GM13977 (cell line): ENCODE measurements at regions of chr4 and their contacts with region 1.

Region 1: DNA sequence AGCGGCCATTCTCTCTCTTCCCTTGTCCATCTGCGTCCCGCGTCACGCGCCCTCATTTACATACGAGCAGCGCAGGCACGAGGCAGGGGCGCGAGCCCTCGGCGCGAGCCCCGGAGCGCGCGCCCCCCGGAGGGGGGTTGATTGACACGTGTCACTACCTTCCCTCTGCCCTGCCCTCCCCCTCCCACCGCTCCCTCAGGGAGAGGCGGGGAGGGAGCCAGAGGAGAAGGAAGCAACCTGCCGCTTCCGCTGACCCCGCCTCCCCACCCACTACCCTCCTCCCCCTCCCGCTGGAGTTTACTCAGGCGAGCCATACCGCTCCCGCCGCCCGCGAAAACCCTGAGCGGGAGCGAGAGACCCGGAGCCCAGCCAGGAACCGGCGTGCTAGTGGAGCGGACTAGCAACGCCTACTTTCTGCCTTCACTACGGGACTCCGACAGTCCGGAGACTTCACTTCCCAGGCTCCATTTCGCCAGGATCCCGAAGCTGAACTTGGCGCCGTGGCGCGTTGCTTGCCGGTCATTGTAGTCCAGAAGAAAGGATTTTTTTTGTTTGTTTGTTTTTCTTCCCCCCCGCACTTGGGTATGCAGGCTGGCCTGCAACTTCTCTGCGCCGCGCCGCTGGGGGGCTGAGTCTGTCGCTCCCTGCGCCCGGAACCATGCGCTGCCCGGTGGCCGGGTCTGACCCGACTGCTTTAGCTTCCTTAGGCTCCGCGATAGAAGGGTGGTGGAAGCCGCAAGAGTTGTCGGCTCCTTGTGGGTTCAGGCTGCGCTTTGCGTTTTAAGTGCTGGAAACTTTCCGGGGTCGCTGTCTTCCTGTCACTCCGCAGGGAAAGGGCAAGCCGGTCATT is at the start of gene LCORL:
- DNase-seq: peak; percentile 95
- CTCF ChIP-seq: peak; percentile 46

Region 2: DNA sequence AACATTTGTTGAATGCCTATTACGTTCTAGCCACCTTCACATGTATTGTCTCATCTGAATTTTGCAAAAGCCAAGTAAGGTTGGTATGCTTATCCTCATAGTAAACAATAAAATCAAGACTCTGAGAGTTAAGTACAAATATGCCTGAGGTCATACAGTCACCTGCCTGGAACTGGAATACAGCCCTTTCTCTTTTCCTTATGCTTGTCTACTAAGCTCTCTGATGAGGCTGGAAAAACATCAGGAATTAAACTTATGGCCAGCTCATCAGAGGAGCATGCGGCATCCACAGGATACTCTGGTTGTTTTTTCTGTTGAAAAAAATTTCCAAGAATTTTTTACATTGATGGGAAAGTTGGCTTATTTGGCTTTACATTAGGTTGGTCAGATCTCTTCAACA is 175.7 kb before region 1 on chr4:
- in situ Hi-C with region 1: loop called (anchors 25 kb)
- DNase-seq: no peak
- CTCF ChIP-seq: no peak

Region 3: DNA sequence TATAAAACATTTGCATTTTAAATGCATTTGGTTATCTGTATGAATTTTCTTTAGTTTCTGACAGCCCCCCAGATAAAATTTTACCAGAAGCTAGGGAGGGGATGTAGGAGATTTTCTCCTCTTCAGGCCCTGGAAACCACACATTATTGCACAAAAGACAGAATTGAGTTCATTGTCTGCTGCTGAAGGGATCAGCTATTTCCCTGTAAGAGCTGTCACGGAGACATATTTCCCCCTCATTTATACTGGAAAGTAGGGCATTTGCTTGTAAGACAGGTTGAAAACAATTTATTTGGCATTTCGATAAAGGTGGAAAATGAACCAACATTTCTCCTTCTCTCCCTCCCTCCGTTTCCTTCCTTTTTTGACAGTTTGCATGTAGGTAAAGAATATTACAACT is 240.9 kb after region 1 on chr4:
- in situ Hi-C with region 1: no loop called
- DNase-seq: no peak
- CTCF ChIP-seq: no peak